HepG2 (cell line): ENCODE measurements at regions of chr22 and their contacts with region 1.

Region 1: DNA sequence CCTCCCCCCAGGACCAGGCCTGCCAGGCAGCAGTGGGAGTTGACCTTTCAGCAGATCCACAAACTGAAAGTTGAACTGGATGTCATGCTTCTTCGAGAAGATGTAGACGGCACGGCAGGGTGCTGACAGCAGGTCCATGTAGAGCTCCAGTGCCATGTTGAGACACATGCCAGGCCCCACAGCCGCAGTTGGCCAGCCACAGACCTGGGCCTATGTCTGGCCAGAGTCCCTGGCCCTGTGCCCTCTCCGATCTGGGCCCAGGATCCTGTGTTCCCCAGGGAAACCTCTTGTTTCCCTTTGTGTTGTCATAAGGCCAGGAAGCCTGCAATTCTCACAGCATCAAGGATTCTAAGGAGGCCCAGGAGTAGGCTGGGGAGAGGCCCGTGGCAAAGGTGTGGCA is at the start of gene GSTT4:
- DNase-seq: no peak
- ATAC-seq: no peak
- H3K4me3 ChIP-seq: peak within 1 kb of the TSS in 2 of 3 experiments; percentile 36 to 53; a peak in 2 of 6 replicates
- H3K27ac ChIP-seq: no peak within 1 kb of the TSS
- H3K4me1 ChIP-seq: peaks cover 83% of the 10 kb centered on the region
- H3K27me3 ChIP-seq: no peaks in the 10 kb centered on the region
- CTCF ChIP-seq: no peak
- EP300 ChIP-seq: no peak
- POLR2A ChIP-seq: no peak
- RAD21 ChIP-seq: no peak
- total RNA-seq, gene GSTT4: 0.18 and 0.62 TPM in 2 replicates

Region 2: GRCh38 chr22:23938328-23939016 is 66.7 kb before region 1 on chr22:
- CTCF ChIA-PET with region 1: no interaction called
- POLR2A ChIA-PET with region 1: no interaction called
- in situ Hi-C with region 1: loop called (anchors 5 kb)
- intact Hi-C with region 1: no loop called
- DNase-seq: peak; percentile 81
- ATAC-seq: peak; percentile 98
- H3K4me3 ChIP-seq: no peak overlapping the region
- H3K27ac ChIP-seq: no peak overlapping the region
- H3K4me1 ChIP-seq: peaks cover 18% of the 10 kb centered on the region
- H3K27me3 ChIP-seq: no peaks in the 10 kb centered on the region
- CTCF ChIP-seq: no peak
- EP300 ChIP-seq: no peak
- POLR2A ChIP-seq: no peak
- RAD21 ChIP-seq: no peak

Region 3: GRCh38 chr22:23970816-23971486 is 34.2 kb before region 1 on chr22:
- CTCF ChIA-PET with region 1: no interaction called
- POLR2A ChIA-PET with region 1: no interaction called
- in situ Hi-C with region 1: no loop called
- intact Hi-C with region 1: no loop called
- DNase-seq: no peak
- ATAC-seq: no peak
- H3K4me3 ChIP-seq: no peak overlapping the region
- H3K27ac ChIP-seq: no peak overlapping the region
- H3K4me1 ChIP-seq: no peaks in the 10 kb centered on the region
- H3K27me3 ChIP-seq: no peaks in the 10 kb centered on the region
- CTCF ChIP-seq: no peak
- EP300 ChIP-seq: no peak
- POLR2A ChIP-seq: no peak
- RAD21 ChIP-seq: no peak

Region 4: DNA sequence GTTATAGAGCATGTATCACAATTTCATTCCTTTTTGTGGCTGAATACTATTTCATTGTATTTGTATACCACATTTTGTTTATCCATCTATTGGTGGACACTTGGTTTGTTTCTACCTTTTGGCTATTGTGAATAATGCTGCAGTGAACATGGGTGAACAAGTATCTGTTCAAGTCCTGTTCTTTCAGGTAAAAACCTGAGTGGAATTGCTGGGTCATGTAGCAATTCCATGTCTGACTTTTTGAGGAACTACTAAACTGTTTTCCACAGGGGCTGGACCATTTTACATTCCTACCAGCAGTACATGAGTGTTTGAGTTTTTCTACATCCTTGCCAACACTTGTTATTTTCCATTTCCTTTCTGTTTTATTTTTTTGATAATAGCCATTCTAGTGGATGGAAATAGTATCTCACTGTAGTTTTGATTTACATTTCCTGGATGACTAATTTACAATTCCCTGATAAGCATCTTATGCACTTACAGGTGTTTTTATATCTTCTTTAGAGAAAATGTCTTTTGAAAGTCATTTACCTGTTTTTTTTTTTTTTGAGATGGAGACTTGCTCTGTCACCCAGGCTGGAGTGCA is 18.1 kb after region 1 on chr22:
- CTCF ChIA-PET with region 1: no interaction called
- POLR2A ChIA-PET with region 1: interaction called, 17 read pairs
- in situ Hi-C with region 1: no loop called
- intact Hi-C with region 1: no loop called
- DNase-seq: no peak
- ATAC-seq: no peak
- H3K4me3 ChIP-seq: no peak overlapping the region
- H3K27ac ChIP-seq: no peak overlapping the region
- H3K4me1 ChIP-seq: peaks cover 46% of the 10 kb centered on the region
- H3K27me3 ChIP-seq: no peaks in the 10 kb centered on the region
- CTCF ChIP-seq: no peak
- EP300 ChIP-seq: no peak
- POLR2A ChIP-seq: no peak
- RAD21 ChIP-seq: no peak